ENCODE measurements at regions of chr13 and their contacts with region 1.

Region 1: GRCh38 chr13:31909864-31910551 is 121.6 kb upstream of the FRY start:
- DNase-seq: peak; percentile 68
- H3K4me3 ChIP-seq: no peak overlapping the region
- H3K27ac ChIP-seq: no peak overlapping the region
- H3K4me1 ChIP-seq: no peaks in the 10 kb centered on the region
- H3K27me3 ChIP-seq: peaks cover 6 to 9% of the 10 kb centered on the region in 2 experiments
- CTCF ChIP-seq: peak; percentile 72 to 75
- POLR2A ChIP-seq: no peak

Region 2: GRCh38 chr13:31896427-31896826 is 13.6 kb before region 1 on chr13:
- CTCF ChIA-PET with region 1: interaction called, 33 read pairs
- POLR2A ChIA-PET with region 1: no interaction called
- dilution Hi-C with region 1: no loop called
- intact Hi-C with region 1: no loop called
- DNase-seq: no peak
- H3K4me3 ChIP-seq: no peak overlapping the region
- H3K27ac ChIP-seq: no peak overlapping the region
- H3K4me1 ChIP-seq: no peaks in the 10 kb centered on the region
- H3K27me3 ChIP-seq: peaks cover 0 to 1% of the 10 kb centered on the region in 2 experiments
- CTCF ChIP-seq: no peak
- POLR2A ChIP-seq: no peak

Region 3: GRCh38 chr13:31967155-31967554 is 57.1 kb after region 1 on chr13:
- CTCF ChIA-PET with region 1: interaction called, 16 read pairs
- POLR2A ChIA-PET with region 1: no interaction called
- dilution Hi-C with region 1: no loop called
- intact Hi-C with region 1: no loop called
- DNase-seq: no peak
- H3K4me3 ChIP-seq: no peak overlapping the region
- H3K27ac ChIP-seq: no peak overlapping the region
- H3K4me1 ChIP-seq: no peaks in the 10 kb centered on the region
- H3K27me3 ChIP-seq: no peaks in the 10 kb centered on the region
- CTCF ChIP-seq: peak in 1 of 2 donors; percentile 13
- POLR2A ChIP-seq: no peak

Region 4: GRCh38 chr13:32010136-32010535 is 100.1 kb after region 1 on chr13:
- CTCF ChIA-PET with region 1: interaction called, 14 read pairs
- POLR2A ChIA-PET with region 1: no interaction called
- dilution Hi-C with region 1: no loop called
- intact Hi-C with region 1: no loop called
- DNase-seq: no peak
- H3K4me3 ChIP-seq: no peak overlapping the region
- H3K27ac ChIP-seq: no peak overlapping the region
- H3K4me1 ChIP-seq: no peaks in the 10 kb centered on the region
- H3K27me3 ChIP-seq: peaks cover 0 to 2% of the 10 kb centered on the region in 2 experiments
- CTCF ChIP-seq: no peak
- POLR2A ChIP-seq: no peak

Region 5: DNA sequence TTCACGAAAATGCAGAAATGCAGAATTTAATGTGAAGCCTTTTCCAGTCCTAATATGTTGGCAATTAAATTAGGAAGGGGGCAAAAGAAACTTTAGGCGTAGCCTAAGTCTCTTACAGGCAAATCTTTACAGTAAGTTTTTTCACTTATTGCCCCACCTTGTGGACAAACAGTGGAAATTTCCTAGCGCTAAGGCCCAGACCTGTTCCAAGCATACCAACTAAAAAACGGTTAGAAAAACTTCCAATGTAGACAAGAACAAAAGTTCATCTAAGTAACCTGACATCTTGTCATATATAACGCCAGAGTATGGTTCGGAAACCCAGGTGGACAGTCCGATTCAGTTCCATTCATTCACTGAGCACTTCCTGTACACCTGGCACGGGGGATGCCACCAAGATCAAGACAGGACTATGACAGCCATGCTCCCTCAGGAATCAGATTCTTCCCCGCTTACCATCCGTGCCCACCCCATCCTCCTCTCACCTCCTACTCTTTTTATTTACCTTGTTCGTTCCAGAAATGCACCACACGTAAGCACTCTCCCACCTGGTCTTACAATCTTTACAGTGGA is 400.2 kb after region 1 on chr13:
- CTCF ChIA-PET with region 1: interaction called, 7 read pairs
- POLR2A ChIA-PET with region 1: no interaction called
- dilution Hi-C with region 1: no loop called
- intact Hi-C with region 1: loop called (anchors 1 kb)
- DNase-seq: peak; percentile 72
- H3K4me3 ChIP-seq: no peak overlapping the region
- H3K27ac ChIP-seq: no peak overlapping the region
- H3K4me1 ChIP-seq: peaks cover 14% of the 10 kb centered on the region
- H3K27me3 ChIP-seq: no peaks in the 10 kb centered on the region
- CTCF ChIP-seq: peak; percentile 56 to 60
- POLR2A ChIP-seq: no peak

Region 6: DNA sequence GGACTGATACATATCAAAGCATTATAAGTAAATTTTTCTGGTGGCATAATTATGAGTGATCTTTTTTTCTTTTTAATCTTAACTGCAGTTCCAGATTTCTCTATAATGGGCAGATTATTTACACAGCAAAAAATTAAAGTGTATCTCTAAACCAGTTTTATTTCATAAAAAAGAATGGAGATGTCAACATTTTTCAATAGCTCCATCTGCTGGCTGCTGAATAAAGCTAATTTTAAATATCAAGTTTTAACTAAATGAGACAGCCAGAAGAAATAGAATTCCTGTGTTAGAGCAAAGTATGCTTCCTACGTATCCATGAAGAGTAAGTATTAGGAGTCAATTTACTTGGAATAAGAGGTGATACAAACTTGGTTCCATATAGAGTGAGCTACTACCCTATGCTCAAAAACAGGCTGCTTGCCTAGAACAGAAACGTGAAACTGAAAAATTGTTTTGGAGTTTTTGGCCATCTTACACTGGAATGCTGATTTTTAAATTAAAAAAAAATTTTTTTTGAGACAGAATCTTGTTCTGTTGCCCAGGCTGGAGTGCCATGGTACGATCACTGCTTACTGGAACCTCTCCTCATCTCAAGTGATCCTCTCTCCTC is 671.3 kb after region 1 on chr13:
- CTCF ChIA-PET with region 1: interaction called, 437 read pairs
- POLR2A ChIA-PET with region 1: no interaction called
- dilution Hi-C with region 1: no loop called
- intact Hi-C with region 1: loop called (anchors 1 kb)
- DNase-seq: peak; percentile 26
- H3K4me3 ChIP-seq: no peak overlapping the region
- H3K27ac ChIP-seq: no peak overlapping the region
- H3K4me1 ChIP-seq: peaks cover 10% of the 10 kb centered on the region
- H3K27me3 ChIP-seq: peaks cover 0 to 1% of the 10 kb centered on the region in 2 experiments
- CTCF ChIP-seq: peak; percentile 21 to 26
- POLR2A ChIP-seq: no peak

Region 7: DNA sequence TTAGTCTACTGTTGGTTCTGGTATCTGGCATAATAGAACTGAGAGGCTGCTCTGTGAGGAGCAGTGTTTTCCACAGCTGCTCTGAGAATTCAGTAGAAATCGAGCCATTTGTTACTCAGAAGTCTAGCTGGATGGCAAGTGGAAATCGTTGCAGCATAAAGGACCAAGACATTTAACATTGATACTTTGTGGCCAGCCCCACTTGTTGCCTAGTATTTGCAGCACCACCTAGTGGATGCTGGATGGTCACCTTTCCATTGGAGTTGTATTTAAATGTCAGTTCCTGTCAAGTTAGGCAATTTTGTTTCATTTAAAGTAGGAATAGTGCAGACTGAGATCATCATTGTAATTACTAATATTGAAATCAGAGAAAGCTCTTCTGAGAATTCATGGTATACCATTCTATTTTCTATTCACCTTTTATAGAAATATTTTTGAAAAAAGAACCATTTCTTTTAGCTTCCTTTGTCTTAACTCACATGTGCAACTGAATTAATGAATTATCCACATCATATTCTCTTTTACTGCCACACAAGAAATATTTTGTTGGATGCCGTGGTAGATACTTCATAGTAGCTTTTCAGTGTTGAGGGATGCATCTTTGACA is 740.8 kb after region 1 on chr13:
- CTCF ChIA-PET with region 1: interaction called, 12 read pairs
- POLR2A ChIA-PET with region 1: no interaction called
- dilution Hi-C with region 1: no loop called
- intact Hi-C with region 1: no loop called
- DNase-seq: peak; percentile 77
- H3K4me3 ChIP-seq: no peak overlapping the region
- H3K27ac ChIP-seq: no peak overlapping the region
- H3K4me1 ChIP-seq: no peaks in the 10 kb centered on the region
- H3K27me3 ChIP-seq: no peaks in the 10 kb centered on the region
- CTCF ChIP-seq: peak; percentile 73 to 78
- POLR2A ChIP-seq: no peak

Measured in endothelial cell of umbilical vein (primary cell).